Heart left ventricle (tissue), 16 donors: ENCODE measurements at regions of chr21 and their contacts with region 1.

Region 1: DNA sequence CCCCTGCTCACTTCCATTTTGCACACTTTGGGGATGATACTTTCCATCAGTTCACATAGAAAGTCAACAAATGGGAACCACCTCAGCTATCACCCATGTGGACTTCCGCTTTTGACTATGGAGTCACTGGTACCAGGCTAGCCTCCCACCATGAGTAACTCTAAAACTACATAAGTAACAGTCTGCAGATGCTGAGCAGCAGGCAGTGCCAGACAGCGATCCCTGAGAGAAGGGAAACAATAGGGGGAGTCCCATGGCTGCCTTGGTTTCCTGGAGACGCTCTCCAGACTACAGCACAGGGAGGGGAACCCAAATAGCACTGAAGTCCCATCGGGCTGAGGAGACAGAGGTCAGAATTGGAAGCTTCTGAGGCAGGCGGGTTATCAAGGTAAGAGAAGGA is 2.8 kb upstream of the TFF2 start:
- DNase-seq: no peak
- ATAC-seq: no peak
- H3K4me3 ChIP-seq: no peak overlapping the region
- H3K27ac ChIP-seq: no peak overlapping the region
- H3K4me1 ChIP-seq: no peaks in the 10 kb centered on the region
- H3K27me3 ChIP-seq: peaks cover 0 to 3% (median 0%) of the 10 kb centered on the region in 9 donors
- CTCF ChIP-seq: no peak
- POLR2A ChIP-seq: no peak

Region 2: GRCh38 chr21:41615613-41616012 is 738.0 kb before region 1 on chr21:
- intact Hi-C with region 1: no loop called
- DNase-seq: no peak
- ATAC-seq: no peak
- H3K4me3 ChIP-seq: no peak overlapping the region
- H3K27ac ChIP-seq: peak overlapping the region in 6 of 12 donors; percentile 6 to 65 (median 52)
- H3K4me1 ChIP-seq: peaks cover 0 to 26% (median 8%) of the 10 kb centered on the region in 12 donors
- H3K27me3 ChIP-seq: peaks cover 0 to 14% (median 4%) of the 10 kb centered on the region in 9 donors
- CTCF ChIP-seq: no peak
- POLR2A ChIP-seq: no peak

Region 3: DNA sequence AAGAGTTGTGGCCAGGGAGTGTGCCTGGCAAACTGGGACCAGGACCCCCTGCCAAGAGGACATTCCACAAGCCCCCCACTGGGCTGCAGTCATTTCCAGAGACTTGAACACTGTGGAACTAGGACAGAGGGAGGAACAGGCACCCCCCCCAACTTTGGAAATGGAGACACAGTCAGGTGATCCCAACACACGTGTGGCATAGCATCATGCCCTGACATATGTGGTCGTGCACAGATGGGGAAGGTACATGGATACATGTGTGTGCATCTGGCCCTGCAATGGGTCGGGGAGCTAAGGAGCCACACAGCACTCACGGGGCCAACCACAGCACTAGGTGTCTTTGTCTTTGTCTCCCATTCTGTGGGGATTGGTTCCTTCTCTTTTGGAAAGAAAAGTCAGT is 31.8 kb before region 1 on chr21:
- intact Hi-C with region 1: loop called in 1 of 10 experiments (anchors 2 kb)
- DNase-seq: no peak
- ATAC-seq: no peak
- H3K4me3 ChIP-seq: no peak overlapping the region
- H3K27ac ChIP-seq: no peak overlapping the region
- H3K4me1 ChIP-seq: peaks cover 0 to 10% (median 0%) of the 10 kb centered on the region in 12 donors
- H3K27me3 ChIP-seq: peaks cover 0 to 8% (median 0%) of the 10 kb centered on the region in 9 donors
- CTCF ChIP-seq: no peak
- POLR2A ChIP-seq: no peak